ENCODE measurements at regions of chr5 and their contacts with region 1.

Region 1: DNA sequence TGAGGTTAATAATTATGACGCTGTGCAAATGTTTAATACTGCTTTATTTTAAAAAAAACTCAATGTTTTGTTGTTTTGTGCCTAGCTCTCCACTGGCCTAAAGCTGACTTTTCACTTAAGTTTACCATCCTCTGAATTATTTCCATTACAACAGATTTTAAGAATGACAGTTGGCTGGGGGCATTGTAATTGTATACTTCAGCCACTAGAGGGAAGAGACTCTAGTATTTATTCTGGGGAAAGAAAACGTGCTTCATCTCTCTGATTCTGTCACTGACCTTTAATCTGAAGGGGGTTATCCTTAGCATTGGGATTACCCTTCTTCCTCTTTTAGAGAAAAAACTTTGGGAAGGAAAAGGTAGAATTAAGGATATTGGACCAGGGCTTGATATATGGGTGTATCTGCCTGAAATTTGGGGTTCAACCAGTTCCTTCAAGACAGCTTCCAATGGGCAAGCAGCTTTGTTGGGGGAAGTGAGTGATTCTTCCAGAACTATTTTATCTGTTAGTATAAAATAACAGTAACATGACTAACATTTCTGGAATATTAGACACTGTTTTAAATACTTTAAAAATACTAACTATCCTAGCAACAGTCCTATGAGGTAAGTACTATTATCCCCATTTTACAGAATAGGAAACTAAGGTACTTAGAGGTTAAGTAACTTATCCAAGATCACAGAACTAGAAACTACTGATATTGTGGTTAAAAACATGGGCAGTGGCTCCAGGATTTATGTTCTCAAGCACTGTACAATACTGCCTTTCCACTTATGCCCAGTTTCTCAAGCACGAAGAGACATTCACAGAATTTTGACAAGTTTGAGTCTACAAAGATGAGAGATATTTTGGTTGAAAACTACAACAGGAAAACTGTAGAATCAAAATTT is 208.4 kb downstream of the CD180 start:
- DNase-seq: no peak
- H3K4me3 ChIP-seq: no peak overlapping the region
- H3K27ac ChIP-seq: no peak overlapping the region
- H3K4me1 ChIP-seq: peaks cover 0 to 16% of the 10 kb centered on the region in 2 donors
- H3K27me3 ChIP-seq: no peaks in the 10 kb centered on the region
- CTCF ChIP-seq: peak; percentile 60 to 84 (median 75)

Region 2: GRCh38 chr5:66415208-66415607 is 573.0 kb before region 1 on chr5:
- intact Hi-C with region 1: no loop called
- DNase-seq: no peak
- H3K4me3 ChIP-seq: no peak overlapping the region
- H3K27ac ChIP-seq: no peak overlapping the region
- H3K4me1 ChIP-seq: no peaks in the 10 kb centered on the region
- H3K27me3 ChIP-seq: no peaks in the 10 kb centered on the region
- CTCF ChIP-seq: no peak

Region 3: DNA sequence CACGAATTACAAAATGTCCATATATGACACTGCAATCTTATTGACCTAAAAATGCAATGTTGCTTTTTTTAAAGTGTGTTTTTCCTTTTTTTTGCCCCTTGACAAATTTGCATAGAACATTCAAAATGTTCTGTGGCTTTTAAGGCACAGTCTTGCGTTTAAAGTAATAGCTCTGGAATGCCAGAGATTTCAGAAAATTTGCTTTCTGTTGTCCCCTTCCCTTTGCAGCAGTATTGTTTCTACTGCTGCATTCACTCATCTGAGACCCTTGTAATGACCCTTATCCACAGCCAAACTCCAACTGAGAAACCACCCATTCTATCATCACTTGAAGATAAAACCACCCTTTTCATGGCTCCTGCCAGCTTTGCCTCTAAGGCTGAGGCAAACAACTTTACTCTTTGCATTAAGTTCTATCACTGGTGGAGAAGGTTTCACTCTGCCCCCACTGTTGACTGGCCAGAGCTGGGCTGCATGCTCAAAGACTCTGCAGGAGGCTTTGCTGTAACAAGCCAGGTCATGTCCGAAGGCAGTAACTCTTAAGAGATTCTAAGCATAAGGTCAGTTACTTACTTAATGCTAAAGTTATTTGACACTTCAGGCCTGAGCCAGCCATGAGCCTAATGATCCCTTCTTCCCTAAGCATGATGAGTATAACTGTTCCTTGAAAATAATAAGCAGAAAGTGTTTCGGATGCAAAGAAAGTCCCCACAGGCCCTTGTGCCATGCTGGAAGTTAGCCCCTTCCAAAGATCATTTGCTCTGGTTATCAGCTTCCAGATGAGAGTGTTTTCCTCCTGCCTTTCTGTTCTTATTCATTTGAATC is 106.5 kb after region 1 on chr5:
- intact Hi-C with region 1: loop called (anchors 2 kb)
- DNase-seq: no peak
- H3K4me3 ChIP-seq: peak overlapping the region; percentile 9 to 15
- H3K27ac ChIP-seq: peak overlapping the region; percentile 68 to 85
- H3K4me1 ChIP-seq: peaks cover 8 to 32% of the 10 kb centered on the region in 2 donors
- H3K27me3 ChIP-seq: no peaks in the 10 kb centered on the region
- CTCF ChIP-seq: no peak